Activated CD4-positive, alpha-beta memory T cell treated with anti-CD3 and anti-CD28 coated beads for 36 hours (primary cell): ENCODE measurements at regions of chr22 and their contacts with region 1.

Region 1: GRCh38 chr22:20495861-20496681 is 476 bp upstream of the KLHL22 start:
- DNase-seq: peak; percentile 95
- H3K4me3 Mint-ChIP-seq: peak overlapping the region; percentile 86
- H3K27ac Mint-ChIP-seq: peak overlapping the region; percentile 80
- H3K4me1 Mint-ChIP-seq: peaks cover 31% of the 10 kb centered on the region
- H3K27me3 Mint-ChIP-seq: no peaks in the 10 kb centered on the region

Region 2: GRCh38 chr22:20430720-20431510 is 65.2 kb before region 1 on chr22:
- CTCF ChIA-PET with region 1: interaction called, 3 read pairs
- POLR2A ChIA-PET with region 1: no interaction called
- intact Hi-C with region 1: loop called (anchors 2 kb)
- DNase-seq: peak; percentile 71
- H3K4me3 Mint-ChIP-seq: peak overlapping the region; percentile 23
- H3K27ac Mint-ChIP-seq: no peak overlapping the region
- H3K4me1 Mint-ChIP-seq: peaks cover 15% of the 10 kb centered on the region
- H3K27me3 Mint-ChIP-seq: peaks cover 46% of the 10 kb centered on the region

Region 3: GRCh38 chr22:20463324-20464095 is 32.6 kb before region 1 on chr22:
- CTCF ChIA-PET with region 1: interaction called, 4 read pairs
- POLR2A ChIA-PET with region 1: interaction called, 3 read pairs
- intact Hi-C with region 1: loop called (anchors 2 kb)
- DNase-seq: peak; percentile 35
- H3K4me3 Mint-ChIP-seq: peak overlapping the region; percentile 35
- H3K27ac Mint-ChIP-seq: peak overlapping the region; percentile 94
- H3K4me1 Mint-ChIP-seq: peaks cover 54% of the 10 kb centered on the region
- H3K27me3 Mint-ChIP-seq: no peaks in the 10 kb centered on the region

Region 4: DNA sequence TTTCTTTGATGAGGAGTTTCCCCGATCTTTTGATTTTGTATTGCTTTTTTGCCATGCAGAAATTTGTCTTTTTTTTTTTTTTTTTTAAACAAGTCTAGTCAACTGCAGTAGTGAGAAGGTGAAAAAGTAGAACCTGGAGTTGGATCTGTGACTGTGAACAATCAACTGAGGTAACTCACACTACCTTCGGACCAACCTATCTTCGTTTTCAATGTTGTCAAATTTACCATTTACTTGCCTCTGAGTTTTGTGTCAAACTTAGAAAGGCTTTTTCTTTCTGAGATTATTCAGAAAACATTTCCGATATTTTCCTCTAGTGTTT is 21.0 kb before region 1 on chr22:
- CTCF ChIA-PET with region 1: interaction called, 3 read pairs
- POLR2A ChIA-PET with region 1: interaction called, 3 read pairs
- intact Hi-C with region 1: loop called (anchors 1 kb)
- DNase-seq: no peak
- H3K4me3 Mint-ChIP-seq: peak overlapping the region; percentile 56
- H3K27ac Mint-ChIP-seq: peak overlapping the region; percentile 87
- H3K4me1 Mint-ChIP-seq: peaks cover 37% of the 10 kb centered on the region
- H3K27me3 Mint-ChIP-seq: no peaks in the 10 kb centered on the region

Region 5: DNA sequence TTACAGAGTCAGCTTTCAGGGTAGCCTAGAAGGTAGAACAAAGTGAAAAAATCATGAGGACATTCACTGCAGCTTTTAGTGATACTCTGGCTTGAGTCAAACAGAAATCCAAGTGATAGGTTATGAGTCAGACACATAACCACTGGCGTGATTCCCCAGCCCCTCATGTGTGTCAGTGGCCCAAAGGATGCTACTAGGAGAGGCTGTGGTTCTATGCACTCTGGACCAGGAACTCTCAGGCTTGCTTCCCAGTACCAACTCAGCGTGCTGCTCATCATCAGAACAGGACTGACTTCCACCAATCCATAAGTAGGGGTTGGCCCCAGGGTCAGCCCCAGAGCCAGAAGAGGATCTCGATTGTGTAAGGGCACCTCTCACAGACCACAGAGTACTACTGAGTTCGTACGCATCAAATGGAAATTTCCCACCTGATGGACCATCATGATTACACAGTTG is 128.1 kb after region 1 on chr22:
- CTCF ChIA-PET with region 1: no interaction called
- POLR2A ChIA-PET with region 1: interaction called, 3 read pairs
- intact Hi-C with region 1: loop called (anchors 10 kb)
- DNase-seq: peak; percentile 84
- H3K4me3 Mint-ChIP-seq: no peak overlapping the region
- H3K27ac Mint-ChIP-seq: peak overlapping the region; percentile 32
- H3K4me1 Mint-ChIP-seq: peaks cover 20% of the 10 kb centered on the region
- H3K27me3 Mint-ChIP-seq: peaks cover 2% of the 10 kb centered on the region